Lower leg skin (tissue), 4 donors: ENCODE measurements at regions of chr3 and their contacts with region 1.

Region 1: DNA sequence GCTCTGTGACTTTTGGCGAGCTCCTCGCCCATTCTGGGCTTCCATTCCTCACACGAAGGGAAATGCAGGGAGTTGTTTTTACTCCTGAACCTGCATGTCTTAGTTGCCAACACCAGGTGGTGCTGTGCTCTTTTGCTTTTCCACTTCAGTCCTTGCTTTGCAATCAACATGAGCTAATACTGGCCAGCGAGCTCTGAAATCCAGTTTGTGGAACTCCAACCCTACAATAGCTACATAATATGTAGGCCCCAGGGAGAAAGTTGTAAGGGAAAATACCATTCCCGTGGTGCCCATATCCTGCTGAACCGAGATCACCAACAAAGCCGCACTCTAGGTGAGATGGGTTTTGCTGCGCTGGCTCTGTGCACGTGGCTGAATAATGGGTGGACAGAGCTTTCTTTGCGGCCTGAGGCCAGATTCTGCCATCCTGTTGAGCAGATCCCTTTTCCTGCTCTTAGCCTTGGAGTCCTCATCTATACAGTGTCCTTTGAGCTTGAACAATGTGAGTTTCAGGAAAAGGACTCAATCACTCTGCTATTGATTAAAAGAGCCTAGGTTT is 25.0 kb downstream of the LSM3 start:
- DNase-seq: peak; percentile 75 to 90
- H3K4me3 ChIP-seq: no peak overlapping the region
- CTCF ChIP-seq: peak in 1 of 3 donors; percentile 73
- POLR2A ChIP-seq: no peak

Region 2: DNA sequence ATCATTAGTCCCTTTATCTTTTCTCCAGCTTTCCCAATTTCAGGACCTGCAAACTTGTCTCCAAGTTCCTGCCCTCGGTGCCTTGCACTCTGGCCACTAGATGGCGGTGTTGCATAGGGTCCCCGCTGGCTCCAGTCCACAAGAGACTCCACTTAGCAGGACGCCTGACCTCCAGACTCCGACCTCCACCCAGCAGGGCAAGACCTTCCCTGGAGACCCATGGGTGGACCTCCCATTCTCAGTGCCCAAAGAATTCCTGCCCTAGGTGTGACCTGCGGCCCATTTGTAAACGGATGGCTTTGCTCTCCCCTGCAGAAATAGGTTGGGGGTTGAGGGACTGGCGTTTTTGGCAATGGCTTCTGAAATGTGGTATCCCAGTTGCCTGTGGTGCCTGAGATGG is 57.6 kb after region 1 on chr3:
- intact Hi-C with region 1: loop called (anchors 10 kb)
- DNase-seq: peak; percentile 83 to 97
- H3K4me3 ChIP-seq: no peak overlapping the region
- CTCF ChIP-seq: peak in 1 of 3 donors; percentile 80
- POLR2A ChIP-seq: no peak

Region 3: GRCh38 chr3:14461748-14462324 is 258.2 kb after region 1 on chr3:
- intact Hi-C with region 1: loop called (anchors 5 kb)
- DNase-seq: no peak
- H3K4me3 ChIP-seq: no peak overlapping the region
- CTCF ChIP-seq: no peak
- POLR2A ChIP-seq: no peak